ENCODE measurements at regions of chr1 and their contacts with region 1.

Region 1: GRCh38 chr1:219566951-219567947 is 45.7 kb downstream of the ZC3H11B start:
- DNase-seq: no peak
- ATAC-seq: peak; percentile 67 to 75 (median 72)
- H3K4me3 ChIP-seq: no peak overlapping the region
- H3K27ac ChIP-seq: no peak overlapping the region
- H3K4me1 ChIP-seq: peaks cover 0 to 9% (median 1%) of the 10 kb centered on the region in 12 donors
- H3K27me3 ChIP-seq: peaks cover 0 to 3% (median 0%) of the 10 kb centered on the region in 9 donors
- CTCF ChIP-seq: peak; percentile 36 to 71 (median 54)
- POLR2A ChIP-seq: no peak

Region 2: GRCh38 chr1:218339267-218339831 is 1227.9 kb before region 1 on chr1:
- intact Hi-C with region 1: loop called in 7 of 10 experiments (anchors 5 to 10 kb)
- DNase-seq: no peak
- ATAC-seq: no peak
- H3K4me3 ChIP-seq: no peak overlapping the region
- H3K27ac ChIP-seq: no peak overlapping the region
- H3K4me1 ChIP-seq: peaks cover 0 to 6% (median 0%) of the 10 kb centered on the region in 12 donors
- H3K27me3 ChIP-seq: no peaks in the 10 kb centered on the region
- CTCF ChIP-seq: peak; percentile 55 to 83 (median 77)
- POLR2A ChIP-seq: no peak

Region 3: DNA sequence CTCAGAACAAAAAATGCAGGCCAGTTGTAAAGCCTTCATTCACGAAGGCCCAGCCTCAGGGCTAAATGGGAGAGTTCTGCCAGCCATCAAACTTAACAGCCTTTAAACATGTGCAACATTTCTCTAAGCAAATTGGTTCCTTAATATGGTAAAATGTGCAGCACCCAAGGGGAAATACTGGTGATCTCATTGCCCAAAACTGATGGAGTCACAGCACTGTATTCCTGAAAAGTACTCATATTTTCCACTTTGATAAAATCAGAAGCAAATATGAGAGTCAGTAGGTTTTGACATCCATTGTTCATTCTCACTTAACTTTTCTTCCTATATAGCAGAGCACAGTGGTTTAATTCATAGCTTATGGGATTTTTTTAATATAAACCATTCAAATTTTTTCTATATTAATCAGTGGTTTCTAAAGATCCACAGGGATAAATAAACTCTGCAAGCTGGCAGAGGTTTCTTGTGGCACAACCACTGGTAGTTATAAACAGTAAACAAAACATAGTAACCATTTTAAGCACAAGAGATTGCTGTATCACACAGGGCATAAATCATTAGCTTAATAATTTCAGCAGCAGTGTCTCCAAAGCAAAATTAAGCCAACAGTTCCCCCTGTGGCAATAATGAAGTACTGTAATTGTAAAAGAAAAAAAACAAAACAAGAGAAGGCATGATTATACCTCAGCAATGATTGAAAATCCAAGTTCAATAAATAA is 500.5 kb before region 1 on chr1:
- intact Hi-C with region 1: loop called in 1 of 10 experiments (anchors 10 kb)
- DNase-seq: no peak
- ATAC-seq: peak in 3 of 4 donors; percentile 34 to 55 (median 55)
- H3K4me3 ChIP-seq: no peak overlapping the region
- H3K27ac ChIP-seq: peak overlapping the region in 3 of 12 donors; percentile 6 to 25 (median 8)
- H3K4me1 ChIP-seq: peaks cover 0 to 14% (median 1%) of the 10 kb centered on the region in 12 donors
- H3K27me3 ChIP-seq: no peaks in the 10 kb centered on the region
- CTCF ChIP-seq: peak; percentile 31 to 70 (median 56)
- POLR2A ChIP-seq: no peak

Region 4: DNA sequence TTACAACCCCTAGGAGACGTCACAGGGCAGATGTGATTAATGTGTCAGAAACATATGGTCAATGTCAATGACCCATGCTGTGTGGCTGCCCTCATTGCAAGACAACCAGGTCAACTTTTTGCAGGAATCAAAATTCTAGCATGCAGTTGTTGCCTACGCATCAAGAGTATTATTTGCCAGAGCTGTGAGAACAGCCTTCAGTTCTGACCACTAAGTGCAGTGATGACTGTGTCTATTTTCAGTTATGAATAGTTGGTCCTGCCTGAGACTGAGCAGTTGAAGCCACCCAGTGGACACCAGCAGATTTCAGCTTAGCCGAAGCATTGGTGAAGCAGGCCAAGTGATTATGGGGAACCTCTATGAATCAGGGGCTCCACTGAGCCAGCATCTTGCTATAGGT is 346.3 kb before region 1 on chr1:
- intact Hi-C with region 1: loop called in 1 of 10 experiments (anchors 10 kb)
- DNase-seq: peak in 2 of 5 donors; percentile 17 to 20
- ATAC-seq: peak; percentile 67 to 90 (median 88)
- H3K4me3 ChIP-seq: no peak overlapping the region
- H3K27ac ChIP-seq: no peak overlapping the region
- H3K4me1 ChIP-seq: peaks cover 0 to 9% (median 0%) of the 10 kb centered on the region in 12 donors
- H3K27me3 ChIP-seq: no peaks in the 10 kb centered on the region
- CTCF ChIP-seq: peak in 4 of 12 donors; percentile 11 to 41 (median 32)
- POLR2A ChIP-seq: no peak

Region 5: GRCh38 chr1:219422811-219423598 is 144.2 kb before region 1 on chr1:
- intact Hi-C with region 1: no loop called
- DNase-seq: no peak
- ATAC-seq: no peak
- H3K4me3 ChIP-seq: no peak overlapping the region
- H3K27ac ChIP-seq: no peak overlapping the region
- H3K4me1 ChIP-seq: no peaks in the 10 kb centered on the region
- H3K27me3 ChIP-seq: no peaks in the 10 kb centered on the region
- CTCF ChIP-seq: no peak
- POLR2A ChIP-seq: no peak

Region 6: DNA sequence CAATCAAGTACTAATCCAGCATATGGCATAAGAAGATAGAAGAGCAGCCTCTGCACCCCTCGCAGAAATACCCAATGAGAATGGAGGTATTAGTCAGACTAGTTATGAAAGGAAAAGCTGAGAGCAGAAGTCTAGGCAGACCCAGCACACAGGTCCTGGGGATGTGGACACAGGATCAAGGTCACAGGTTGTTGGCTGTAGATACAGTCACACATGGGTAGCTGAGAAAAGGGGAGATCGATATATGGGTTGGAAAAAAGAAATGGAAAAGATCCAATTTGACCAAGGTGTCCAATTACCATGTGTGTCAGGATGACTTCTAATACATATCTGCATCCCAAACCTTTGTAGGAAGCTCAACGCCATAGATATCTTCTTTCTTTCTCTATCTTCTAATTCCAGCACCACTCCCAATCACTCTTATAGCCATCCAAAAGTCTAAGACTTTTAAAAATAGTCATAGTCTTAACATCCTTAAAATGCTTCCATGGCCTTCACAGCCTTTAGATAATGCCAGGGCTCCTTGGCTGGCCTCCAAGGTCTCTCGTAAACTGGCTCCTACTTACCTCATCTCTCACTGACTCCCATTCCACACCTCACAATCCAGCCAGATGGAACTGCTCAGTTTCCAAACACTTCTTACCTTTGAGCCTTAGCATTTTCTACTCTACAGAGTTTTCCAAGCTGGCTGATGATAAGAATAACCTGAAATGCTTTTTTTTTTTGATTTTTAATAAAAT is 54.0 kb after region 1 on chr1:
- intact Hi-C with region 1: no loop called
- DNase-seq: peak in 2 of 5 donors; percentile 33 to 51
- ATAC-seq: peak in 2 of 4 donors; percentile 58 to 67
- H3K4me3 ChIP-seq: no peak overlapping the region
- H3K27ac ChIP-seq: no peak overlapping the region
- H3K4me1 ChIP-seq: peaks cover 0 to 12% (median 0%) of the 10 kb centered on the region in 12 donors
- H3K27me3 ChIP-seq: no peaks in the 10 kb centered on the region
- CTCF ChIP-seq: no peak
- POLR2A ChIP-seq: no peak

Region 7: DNA sequence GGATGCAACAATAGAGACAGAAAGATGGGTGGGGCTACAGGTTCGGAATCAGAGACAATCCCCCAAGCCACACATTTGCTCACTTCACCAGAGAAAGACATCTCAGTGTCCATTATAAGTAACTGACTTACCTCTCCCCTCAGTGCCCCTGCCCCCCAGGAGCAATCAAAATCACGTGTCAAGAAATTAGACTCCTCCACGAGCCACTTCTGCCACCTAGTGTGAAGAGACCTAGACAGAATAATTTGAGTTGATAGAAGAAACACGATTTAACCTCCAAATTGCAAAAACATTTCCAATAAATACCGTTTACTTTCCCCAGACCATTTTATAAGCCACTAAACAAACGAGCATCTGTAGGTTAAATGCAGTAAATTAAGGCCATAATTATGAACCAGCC is 237.9 kb after region 1 on chr1:
- intact Hi-C with region 1: loop called in 7 of 10 experiments (anchors 5 to 10 kb)
- DNase-seq: no peak
- ATAC-seq: no peak
- H3K4me3 ChIP-seq: no peak overlapping the region
- H3K27ac ChIP-seq: no peak overlapping the region
- H3K4me1 ChIP-seq: no peaks in the 10 kb centered on the region
- H3K27me3 ChIP-seq: peaks cover 0 to 3% (median 0%) of the 10 kb centered on the region in 9 donors
- CTCF ChIP-seq: peak in 11 of 12 donors; percentile 9 to 42 (median 24)
- POLR2A ChIP-seq: no peak